PC-9 (cell line): ENCODE measurements at regions of chr5 and their contacts with region 1.

Region 1: DNA sequence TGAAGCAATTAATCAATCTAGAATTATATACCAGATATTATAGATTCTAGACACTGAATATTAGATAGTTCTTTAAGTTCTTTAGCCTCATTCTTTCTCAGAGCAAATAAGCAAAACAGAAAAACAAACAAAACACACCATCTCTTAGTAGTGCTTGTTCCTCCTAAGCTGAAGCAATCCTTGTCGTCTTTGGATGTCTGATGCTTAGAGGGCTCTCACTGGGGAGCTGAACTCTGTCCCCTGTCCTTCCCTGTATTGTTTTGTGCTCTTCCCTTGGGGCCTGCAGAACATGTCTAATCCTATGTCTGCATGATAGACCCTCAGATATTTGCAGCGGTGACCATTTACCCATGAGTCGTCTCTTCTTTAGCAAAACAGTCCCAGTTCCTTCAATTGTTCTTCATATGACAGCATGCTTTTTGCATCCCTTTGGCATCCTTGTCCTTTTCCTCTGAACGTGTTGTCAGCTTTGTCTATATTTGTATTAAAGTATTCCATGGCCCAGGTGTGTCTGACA is 114.3 kb downstream of the ARHGEF28 start:
- DNase-seq: no peak
- H3K4me3 ChIP-seq: no peak overlapping the region
- H3K27ac ChIP-seq: no peak overlapping the region
- H3K4me1 ChIP-seq: no peaks in the 10 kb centered on the region
- H3K27me3 ChIP-seq: no peaks in the 10 kb centered on the region
- CTCF ChIP-seq: no peak

Region 2: DNA sequence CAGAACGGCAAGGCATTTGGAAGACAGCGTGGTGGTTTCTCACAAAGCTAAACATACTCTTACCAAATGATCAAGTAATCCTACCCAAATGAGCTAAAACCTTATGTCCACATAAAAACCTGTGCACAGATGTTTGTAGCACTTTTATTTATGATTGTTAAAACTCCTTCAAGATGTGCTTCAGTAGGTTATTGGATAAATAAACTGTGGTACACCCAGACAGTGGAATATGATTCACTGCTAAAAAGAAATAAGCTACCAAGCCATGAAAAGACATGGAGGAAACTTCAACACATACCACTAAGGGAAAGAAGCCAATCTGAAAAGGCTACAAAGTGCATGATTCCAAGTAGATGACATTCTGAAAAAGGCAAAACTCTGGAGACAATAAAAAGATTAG is 385.9 kb before region 1 on chr5:
- CTCF ChIA-PET with region 1: no interaction called
- POLR2A ChIA-PET with region 1: interaction called, 32 read pairs
- intact Hi-C with region 1: no loop called
- DNase-seq: no peak
- H3K4me3 ChIP-seq: no peak overlapping the region
- H3K27ac ChIP-seq: no peak overlapping the region
- H3K4me1 ChIP-seq: no peaks in the 10 kb centered on the region
- H3K27me3 ChIP-seq: no peaks in the 10 kb centered on the region
- CTCF ChIP-seq: no peak

Region 3: DNA sequence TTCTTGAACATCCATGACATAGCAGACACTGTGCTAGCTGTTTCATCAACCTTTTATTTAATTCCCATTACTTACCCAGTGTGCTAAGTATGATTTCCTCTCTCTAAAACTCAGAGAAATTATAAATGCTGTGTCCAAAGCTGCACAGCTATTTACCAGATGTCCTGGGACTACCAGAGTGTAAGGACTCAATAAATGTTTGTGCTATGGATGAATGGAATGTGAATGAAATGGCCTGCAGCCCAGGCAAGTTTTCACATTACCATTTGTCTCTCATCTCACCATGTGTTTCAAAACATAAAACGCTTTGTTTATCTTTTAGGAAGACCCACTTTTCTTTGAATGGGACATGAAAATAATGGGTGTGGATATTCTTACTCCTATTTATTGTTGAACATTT is 18.1 kb before region 1 on chr5:
- CTCF ChIA-PET with region 1: no interaction called
- POLR2A ChIA-PET with region 1: interaction called, 3 read pairs
- intact Hi-C with region 1: loop called (anchors 2 kb)
- DNase-seq: no peak
- H3K4me3 ChIP-seq: no peak overlapping the region
- H3K27ac ChIP-seq: no peak overlapping the region
- H3K4me1 ChIP-seq: no peaks in the 10 kb centered on the region
- H3K27me3 ChIP-seq: no peaks in the 10 kb centered on the region
- CTCF ChIP-seq: no peak